Mammary epithelial cell (primary cell): ENCODE measurements at regions of chr11 and their contacts with region 1.

Region 1: GRCh38 chr11:61361686-61362541 is at the starts of genes CYB561A3 and TMEM138:
- DNase-seq: peak; percentile 96
- H3K4me3 ChIP-seq: peak within 1 kb of the TSS; percentile 59 to 76 (median 67)
- H3K27ac ChIP-seq: peak within 1 kb of the TSS; percentile 77
- H3K4me1 ChIP-seq: peaks cover 13% of the 10 kb centered on the region
- H3K27me3 ChIP-seq: no peaks in the 10 kb centered on the region
- CTCF ChIP-seq: no peak
- total RNA-seq, gene CYB561A3: 65.8 to 74.8 TPM
- total RNA-seq, gene TMEM138: 40.2 to 81.9 TPM

Region 2: GRCh38 chr11:61378713-61379313 is 16.9 kb after region 1 on chr11:
- CTCF ChIA-PET with region 1: interaction called, 4 read pairs
- dilution Hi-C with region 1: no loop called
- in situ Hi-C with region 1: no loop called
- intact Hi-C with region 1: loop called (anchors 1 kb)
- DNase-seq: peak; percentile 92
- H3K4me3 ChIP-seq: no peak overlapping the region
- H3K27ac ChIP-seq: peak overlapping the region; percentile 65
- H3K4me1 ChIP-seq: peaks cover 33% of the 10 kb centered on the region
- H3K27me3 ChIP-seq: no peaks in the 10 kb centered on the region
- CTCF ChIP-seq: no peak

Region 3: GRCh38 chr11:61384271-61385242 is 22.6 kb after region 1 on chr11:
- CTCF ChIA-PET with region 1: interaction called, 9 read pairs
- dilution Hi-C with region 1: no loop called
- in situ Hi-C with region 1: no loop called
- intact Hi-C with region 1: loop called (anchors 1 kb)
- DNase-seq: no peak
- H3K4me3 ChIP-seq: no peak overlapping the region
- H3K27ac ChIP-seq: no peak overlapping the region
- H3K4me1 ChIP-seq: peaks cover 9% of the 10 kb centered on the region
- H3K27me3 ChIP-seq: no peaks in the 10 kb centered on the region
- CTCF ChIP-seq: peak; percentile 51 to 60

Region 4: GRCh38 chr11:61602775-61603569 is 241.1 kb after region 1 on chr11:
- CTCF ChIA-PET with region 1: no interaction called
- dilution Hi-C with region 1: no loop called
- in situ Hi-C with region 1: no loop called
- intact Hi-C with region 1: no loop called
- DNase-seq: peak; percentile 98
- H3K4me3 ChIP-seq: no peak overlapping the region
- H3K27ac ChIP-seq: peak overlapping the region; percentile 79
- H3K4me1 ChIP-seq: peaks cover 37% of the 10 kb centered on the region
- H3K27me3 ChIP-seq: no peaks in the 10 kb centered on the region
- CTCF ChIP-seq: no peak